ENCODE measurements at regions of chr16 and their contacts with region 1.

Region 1: GRCh38 chr16:11224096-11224893 is 31.7 kb downstream of the SOCS1 start:
- DNase-seq: peak; percentile 70
- H3K4me3 Mint-ChIP-seq: peak overlapping the region; percentile 76
- H3K27ac Mint-ChIP-seq: peak overlapping the region; percentile 100
- H3K4me1 Mint-ChIP-seq: peaks cover 50% of the 10 kb centered on the region
- H3K27me3 Mint-ChIP-seq: no peaks in the 10 kb centered on the region

Region 2: GRCh38 chr16:11076259-11077018 is 147.9 kb before region 1 on chr16:
- intact Hi-C with region 1: loop called (anchors 2 kb)
- DNase-seq: peak; percentile 70
- H3K4me3 Mint-ChIP-seq: peak overlapping the region; percentile 31
- H3K27ac Mint-ChIP-seq: peak overlapping the region; percentile 94
- H3K4me1 Mint-ChIP-seq: peaks cover 95% of the 10 kb centered on the region
- H3K27me3 Mint-ChIP-seq: no peaks in the 10 kb centered on the region

Region 3: GRCh38 chr16:11161974-11162373 is 62.3 kb before region 1 on chr16:
- intact Hi-C with region 1: loop called (anchors 2 kb)
- DNase-seq: no peak
- H3K4me3 Mint-ChIP-seq: no peak overlapping the region
- H3K27ac Mint-ChIP-seq: peak overlapping the region; percentile 90
- H3K4me1 Mint-ChIP-seq: peaks cover 65% of the 10 kb centered on the region
- H3K27me3 Mint-ChIP-seq: no peaks in the 10 kb centered on the region

Region 4: DNA sequence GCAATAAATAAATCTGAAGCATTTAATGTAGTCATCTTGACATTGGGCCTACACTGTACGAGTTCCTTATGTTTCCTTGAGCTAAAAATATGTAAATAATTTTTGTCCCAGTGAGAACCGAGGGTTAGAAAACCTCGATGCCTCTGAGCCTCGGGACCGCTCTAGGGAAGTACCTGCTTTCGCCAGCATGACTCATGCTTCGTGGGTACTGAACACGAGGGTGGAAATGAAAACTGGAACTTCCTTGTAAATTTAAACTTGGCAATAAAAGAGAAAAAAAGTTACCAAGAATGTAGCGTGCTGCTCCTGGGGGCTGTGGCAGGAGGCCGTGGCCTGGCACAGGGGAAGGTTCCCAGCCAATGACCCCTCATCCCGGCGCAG is 42.4 kb before region 1 on chr16:
- intact Hi-C with region 1: loop called (anchors 2 kb)
- DNase-seq: no peak
- H3K4me3 Mint-ChIP-seq: peak overlapping the region; percentile 47
- H3K27ac Mint-ChIP-seq: peak overlapping the region; percentile 88
- H3K4me1 Mint-ChIP-seq: peaks cover 58% of the 10 kb centered on the region
- H3K27me3 Mint-ChIP-seq: no peaks in the 10 kb centered on the region

Region 5: GRCh38 chr16:11273721-11274324 is 49.5 kb after region 1 on chr16:
- intact Hi-C with region 1: no loop called
- DNase-seq: no peak
- H3K4me3 Mint-ChIP-seq: no peak overlapping the region
- H3K27ac Mint-ChIP-seq: no peak overlapping the region
- H3K4me1 Mint-ChIP-seq: no peaks in the 10 kb centered on the region
- H3K27me3 Mint-ChIP-seq: peaks cover 2% of the 10 kb centered on the region

Region 6: GRCh38 chr16:11379420-11379819 is 155.1 kb after region 1 on chr16:
- intact Hi-C with region 1: loop called (anchors 1 kb)
- DNase-seq: no peak
- H3K4me3 Mint-ChIP-seq: no peak overlapping the region
- H3K27ac Mint-ChIP-seq: peak overlapping the region; percentile 74
- H3K4me1 Mint-ChIP-seq: peaks cover 26% of the 10 kb centered on the region
- H3K27me3 Mint-ChIP-seq: no peaks in the 10 kb centered on the region

Measured in activated T-helper 2 cell treated with anti-CD3 and anti-CD28 coated beads, Interferon-gamma antibody, Interleukin-2, Interleukin-4, amounts not matched to agents 10 μg/mL and 5 μg/mL and 100 μg/mL, durations not matched to agents 14 hours and 24 hours and 36 hours (primary cell).